Pancreas (tissue), 10 donors: ENCODE measurements at regions of chr3 and their contacts with region 1.

Region 1: DNA sequence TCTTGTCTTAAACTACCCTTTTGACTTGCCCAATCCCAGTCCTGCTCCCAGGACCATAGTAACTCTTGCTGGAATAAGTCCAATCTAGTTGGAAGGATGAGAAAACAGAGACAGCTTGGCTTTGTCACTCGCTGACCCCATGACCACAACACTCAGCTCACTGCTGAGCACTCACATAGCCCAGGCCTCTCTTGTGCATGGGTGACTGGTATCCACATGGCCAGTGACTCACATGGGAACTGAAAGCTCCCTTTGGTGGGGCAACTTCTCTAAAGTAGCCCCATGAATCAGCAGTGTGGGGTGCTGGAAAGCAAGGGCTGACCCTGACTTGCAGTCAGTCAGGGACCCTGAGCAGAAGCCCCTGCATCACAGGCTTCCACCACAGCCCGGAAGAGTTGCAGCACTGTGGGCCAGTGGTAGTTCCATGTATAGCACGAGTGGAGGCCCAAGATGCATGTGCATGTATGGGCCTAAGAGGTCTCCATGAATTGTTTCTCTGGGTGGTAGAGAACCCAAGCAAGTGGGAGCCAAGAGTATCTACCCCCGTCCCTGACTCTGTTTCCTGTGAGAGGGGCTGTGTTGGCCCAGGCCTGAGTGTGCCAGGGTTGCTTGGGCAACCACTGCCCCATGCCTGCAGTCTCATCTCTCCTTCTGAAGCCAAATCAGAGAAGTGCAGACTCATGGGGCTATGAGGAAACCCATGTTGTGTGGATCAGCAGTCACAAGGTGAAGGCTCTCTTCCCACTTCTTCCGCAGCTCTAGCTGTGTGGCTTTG is 62.1 kb upstream of the XCR1 start:
- DNase-seq: peak in 1 of 6 donors; percentile 62
- ATAC-seq: peak in 3 of 4 donors; percentile 64 to 86 (median 82)
- H3K4me3 ChIP-seq: no peak overlapping the region
- H3K27ac ChIP-seq: peak overlapping the region in 2 of 4 donors; percentile 34 to 55
- H3K4me1 ChIP-seq: no peaks in the 10 kb centered on the region
- H3K27me3 ChIP-seq: no peaks in the 10 kb centered on the region
- CTCF ChIP-seq: no peak

Region 2: GRCh38 chr3:45746777-45747622 is 342.4 kb before region 1 on chr3:
- intact Hi-C with region 1: no loop called
- DNase-seq: peak in 1 of 6 donors; percentile 55
- ATAC-seq: peak in 1 of 4 donors; percentile 32
- H3K4me3 ChIP-seq: no peak overlapping the region
- H3K27ac ChIP-seq: no peak overlapping the region
- H3K4me1 ChIP-seq: no peaks in the 10 kb centered on the region
- H3K27me3 ChIP-seq: no peaks in the 10 kb centered on the region
- CTCF ChIP-seq: no peak

Region 3: DNA sequence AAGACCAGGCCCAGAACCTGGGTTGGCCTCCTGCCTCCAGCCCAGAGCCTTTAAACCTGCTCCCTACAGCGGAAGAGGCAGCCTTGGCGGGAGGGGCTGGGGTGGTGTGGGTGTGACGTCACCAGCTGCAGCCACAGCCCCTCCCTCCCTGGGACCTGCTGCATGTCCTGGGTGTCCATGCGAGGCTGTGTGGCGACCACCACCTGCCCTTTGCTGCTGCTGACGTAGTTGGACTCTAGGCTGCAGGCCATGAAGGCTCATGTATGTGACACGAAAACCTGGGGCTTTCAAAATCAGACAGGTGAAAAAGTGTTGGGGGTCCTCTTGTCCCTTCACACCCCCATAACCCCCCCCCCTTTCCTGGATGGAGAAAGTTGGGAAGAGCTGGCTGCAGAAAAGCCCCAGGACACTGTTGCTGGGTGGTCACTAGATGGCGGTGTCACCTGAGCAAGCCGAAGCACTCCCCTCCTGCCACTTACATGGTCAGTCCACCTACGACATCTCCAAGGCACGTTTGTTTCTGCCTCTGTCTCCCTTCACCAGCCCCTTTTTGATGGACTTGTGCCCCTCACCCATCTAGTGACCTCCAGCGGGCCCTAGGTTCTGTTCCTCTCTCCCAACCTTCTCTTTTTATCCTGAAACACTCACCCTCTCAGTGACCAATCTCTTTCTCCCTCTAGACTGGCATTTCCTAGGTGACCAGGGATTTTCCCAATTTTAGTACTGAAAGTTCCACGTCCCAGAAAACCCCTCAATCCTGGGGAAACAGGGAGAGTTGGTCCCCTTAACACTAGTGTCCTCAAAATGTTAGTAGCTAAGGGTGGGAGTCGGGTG is 328.3 kb before region 1 on chr3:
- intact Hi-C with region 1: loop called in 1 of 3 experiments (anchors 10 kb)
- DNase-seq: peak in 4 of 6 donors; percentile 41 to 66 (median 46)
- ATAC-seq: peak; percentile 85 to 97 (median 94)
- H3K4me3 ChIP-seq: no peak overlapping the region
- H3K27ac ChIP-seq: no peak overlapping the region
- H3K4me1 ChIP-seq: no peaks in the 10 kb centered on the region
- H3K27me3 ChIP-seq: no peaks in the 10 kb centered on the region
- CTCF ChIP-seq: peak; percentile 53 to 67 (median 64)

Region 4: DNA sequence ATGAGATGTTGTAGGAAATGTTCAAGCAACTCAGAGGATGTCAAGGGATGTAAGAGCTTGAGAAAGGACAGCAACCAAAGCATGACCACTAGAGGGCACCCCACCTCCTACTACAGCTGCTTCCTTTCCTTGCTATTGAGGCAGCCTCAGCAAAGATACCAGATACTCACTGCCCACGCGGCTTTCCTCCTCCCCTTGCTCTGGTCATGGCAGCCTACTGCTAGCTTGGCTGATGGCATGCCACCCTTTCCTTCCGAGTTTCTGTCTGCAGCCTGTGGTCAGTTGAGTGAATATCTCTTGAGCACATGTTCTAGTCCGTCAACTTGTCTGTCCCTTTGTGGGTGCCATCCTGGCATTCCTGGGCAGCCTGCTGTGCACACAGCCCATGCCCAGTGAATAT is 150.6 kb before region 1 on chr3:
- intact Hi-C with region 1: loop called in 1 of 3 experiments (anchors 10 kb)
- DNase-seq: peak in 5 of 6 donors; percentile 59 to 81 (median 70)
- ATAC-seq: peak; percentile 83 to 94 (median 94)
- H3K4me3 ChIP-seq: no peak overlapping the region
- H3K27ac ChIP-seq: no peak overlapping the region
- H3K4me1 ChIP-seq: no peaks in the 10 kb centered on the region
- H3K27me3 ChIP-seq: no peaks in the 10 kb centered on the region
- CTCF ChIP-seq: peak; percentile 70 to 84 (median 78)

Region 5: GRCh38 chr3:46027736-46028397 is 61.6 kb before region 1 on chr3:
- intact Hi-C with region 1: no loop called
- DNase-seq: no peak
- ATAC-seq: no peak
- H3K4me3 ChIP-seq: no peak overlapping the region
- H3K27ac ChIP-seq: no peak overlapping the region
- H3K4me1 ChIP-seq: no peaks in the 10 kb centered on the region
- H3K27me3 ChIP-seq: no peaks in the 10 kb centered on the region
- CTCF ChIP-seq: no peak

Region 6: DNA sequence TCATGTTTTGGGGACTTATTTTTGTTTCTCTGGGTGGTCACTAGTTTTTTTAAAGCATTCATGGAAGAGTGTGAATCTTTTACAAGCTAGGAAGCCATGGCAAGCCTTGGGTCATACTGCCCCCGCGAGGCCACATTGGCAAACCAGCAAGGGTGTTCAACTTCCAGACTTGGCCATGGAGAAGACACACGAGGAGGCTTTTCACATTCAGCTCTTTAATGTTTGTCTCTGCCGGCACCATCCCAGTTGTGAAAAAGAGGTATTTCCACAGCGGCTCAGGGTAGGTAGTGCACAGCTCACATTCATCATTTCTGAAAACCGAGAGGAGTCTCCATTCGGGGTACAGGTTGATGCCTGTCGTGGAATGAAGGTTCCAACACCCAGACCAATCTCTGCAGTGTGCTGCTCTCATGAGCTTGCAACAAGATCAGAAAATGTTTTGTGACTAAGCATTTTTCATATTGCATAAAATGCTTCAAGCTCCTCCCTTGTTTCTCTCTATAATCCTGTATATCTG is 289.1 kb after region 1 on chr3:
- intact Hi-C with region 1: loop called in 1 of 3 experiments (anchors 10 kb)
- DNase-seq: peak in 5 of 6 donors; percentile 29 to 78 (median 43)
- ATAC-seq: peak in 3 of 4 donors; percentile 72 to 81 (median 74)
- H3K4me3 ChIP-seq: no peak overlapping the region
- H3K27ac ChIP-seq: no peak overlapping the region
- H3K4me1 ChIP-seq: no peaks in the 10 kb centered on the region
- H3K27me3 ChIP-seq: no peaks in the 10 kb centered on the region
- CTCF ChIP-seq: peak in 2 of 4 donors; percentile 47 to 51